Gastrocnemius medialis (tissue), 4 donors: ENCODE measurements at regions of chr7 and their contacts with region 1.

Region 1: DNA sequence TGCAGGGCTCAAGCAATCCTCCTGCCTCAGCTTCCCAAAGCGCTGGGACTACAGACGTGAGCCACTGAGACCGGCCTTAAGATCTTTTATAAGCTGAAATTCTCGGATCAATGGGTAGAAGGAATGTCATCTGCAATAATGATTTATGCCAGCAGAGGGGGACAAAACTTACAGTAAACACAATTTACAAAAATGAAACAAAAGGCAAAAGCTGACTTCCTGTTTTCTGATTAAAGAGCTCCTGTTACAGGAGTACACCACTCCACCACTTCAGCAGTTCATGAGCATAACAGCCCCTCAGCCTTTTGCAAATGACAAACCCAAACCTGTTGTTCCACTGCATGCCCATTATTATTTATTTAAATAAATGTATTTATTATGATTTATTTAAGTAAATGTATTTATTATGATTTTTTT is 88.5 kb upstream of the ATP6V0A4 start:
- DNase-seq: no peak
- ATAC-seq: no peak
- H3K4me3 ChIP-seq: no peak overlapping the region
- H3K27ac ChIP-seq: no peak overlapping the region
- H3K4me1 ChIP-seq: no peaks in the 10 kb centered on the region
- H3K27me3 ChIP-seq: no peaks in the 10 kb centered on the region
- CTCF ChIP-seq: peak in 4 of 5 experiments; percentile 19 to 57 (median 44)
- POLR2A ChIP-seq: no peak

Region 2: DNA sequence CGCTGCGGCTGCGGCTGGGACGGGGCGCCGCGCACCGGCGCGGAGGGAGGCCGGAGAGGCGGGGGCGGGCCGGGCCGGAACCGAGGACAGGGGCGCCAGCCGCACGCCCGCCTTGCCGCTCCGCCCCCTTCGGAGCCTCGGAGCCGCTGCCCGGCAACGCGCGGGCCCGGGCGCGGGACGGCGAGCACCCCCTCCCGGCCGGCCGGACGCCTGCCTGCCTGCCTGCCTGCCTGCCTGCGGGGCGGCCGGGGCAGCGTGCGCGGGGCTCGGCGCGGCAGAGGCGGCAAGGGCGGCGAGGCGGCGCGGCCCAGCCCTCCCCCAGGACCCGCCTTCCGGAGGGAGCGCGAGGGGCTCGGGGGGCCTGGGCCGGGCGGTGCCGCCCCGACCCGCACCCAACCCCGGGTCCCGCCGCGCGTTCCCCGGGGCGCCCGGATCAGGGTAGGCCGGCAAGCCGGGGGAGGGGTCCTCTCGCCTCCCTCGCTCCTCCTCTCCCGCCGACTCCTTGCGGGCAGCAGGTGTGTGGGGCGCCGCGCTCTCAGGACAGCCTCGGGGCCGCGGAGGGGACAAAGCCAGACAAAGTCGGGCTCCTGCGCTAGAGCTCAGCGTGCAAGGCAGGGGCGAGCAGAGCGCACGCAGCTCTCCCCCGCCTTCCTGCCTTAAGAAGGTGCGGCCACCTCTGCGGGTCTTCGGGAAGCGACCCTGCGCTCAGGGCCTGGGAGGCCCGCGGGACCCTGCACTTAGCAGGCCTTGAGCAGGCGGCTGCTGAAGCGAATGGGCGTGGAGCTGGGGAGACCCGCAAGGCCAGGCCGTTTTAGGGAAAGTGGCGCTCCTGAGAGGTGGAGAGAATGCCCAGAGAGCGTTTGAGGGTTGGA is 95.1 kb after region 1 on chr7 and contains the start of gene KIAA1549:
- in situ Hi-C with region 1: loop called in 1 of 4 experiments (anchors 10 kb)
- intact Hi-C with region 1: loop called (anchors 2 kb)
- DNase-seq: no peak
- ATAC-seq: peak; percentile 75 to 82
- H3K4me3 ChIP-seq: peak within 1 kb of the TSS; percentile 47 to 63 (median 57)
- H3K27ac ChIP-seq: no peak within 1 kb of the TSS
- H3K4me1 ChIP-seq: peaks cover 5 to 7% of the 10 kb centered on the region in 2 donors
- H3K27me3 ChIP-seq: peaks cover 2 to 14% (median 7%) of the 10 kb centered on the region in 3 donors
- CTCF ChIP-seq: peak in 3 of 5 experiments; percentile 22 to 29 (median 28)
- POLR2A ChIP-seq: no peak
- total RNA-seq, gene KIAA1549: 0.55 to 0.87 (median 0.75) TPM

Region 3: GRCh38 chr7:139075031-139075652 is 188.6 kb after region 1 on chr7:
- in situ Hi-C with region 1: loop called in 2 of 4 experiments (anchors 5 to 10 kb)
- intact Hi-C with region 1: loop called (anchors 10 kb)
- DNase-seq: peak; percentile 35 to 46
- ATAC-seq: peak; percentile 81 to 90
- H3K4me3 ChIP-seq: no peak overlapping the region
- H3K27ac ChIP-seq: peak overlapping the region; percentile 27 to 50 (median 44)
- H3K4me1 ChIP-seq: no peaks in the 10 kb centered on the region
- H3K27me3 ChIP-seq: no peaks in the 10 kb centered on the region
- CTCF ChIP-seq: peak; percentile 56 to 84 (median 74)
- POLR2A ChIP-seq: no peak